ENCODE measurements at regions of chr17 and their contacts with region 1.

Region 1: DNA sequence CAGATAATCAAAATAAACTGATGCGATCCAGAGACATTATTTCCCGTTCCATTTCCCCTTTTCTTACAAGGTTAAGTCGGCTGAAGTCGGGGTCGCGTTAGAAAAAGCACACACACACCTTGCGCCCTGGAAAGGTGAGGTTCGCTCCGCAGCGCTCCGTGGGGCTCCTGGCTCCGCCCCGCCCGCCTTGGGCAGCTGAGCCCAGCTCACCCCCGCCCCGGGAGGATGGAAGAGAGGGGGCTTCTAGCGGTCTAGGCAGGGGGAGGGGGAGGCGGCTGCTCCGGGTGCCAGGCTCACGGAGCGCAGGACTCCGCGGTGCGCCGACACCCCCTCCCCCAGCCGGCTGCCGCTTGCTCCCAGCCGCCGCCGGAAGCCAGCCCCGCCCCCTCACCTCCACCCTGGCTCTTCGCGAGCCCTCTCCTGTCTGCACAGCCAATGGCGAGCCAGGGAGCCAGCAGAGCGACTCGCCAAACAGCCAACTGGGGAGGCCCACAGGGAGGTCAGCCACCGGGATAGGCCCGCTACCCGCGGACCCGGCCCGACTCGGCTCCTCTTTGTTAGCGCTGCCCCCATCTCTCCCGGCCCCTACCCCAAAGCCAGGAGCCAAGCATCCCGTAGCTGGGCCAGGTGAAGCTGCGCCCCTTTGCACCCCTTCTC is 30.4 kb downstream of the FAM222B start:
- DNase-seq: peak; percentile 99
- H3K4me3 Mint-ChIP-seq: peak overlapping the region; percentile 85
- H3K27ac Mint-ChIP-seq: peak overlapping the region; percentile 97
- H3K4me1 Mint-ChIP-seq: peaks cover 36% of the 10 kb centered on the region
- H3K27me3 Mint-ChIP-seq: no peaks in the 10 kb centered on the region

Region 2: GRCh38 chr17:28763804-28764266 is 48.4 kb before region 1 on chr17:
- intact Hi-C with region 1: loop called (anchors 5 kb)
- DNase-seq: peak; percentile 93
- H3K4me3 Mint-ChIP-seq: no peak overlapping the region
- H3K27ac Mint-ChIP-seq: no peak overlapping the region
- H3K4me1 Mint-ChIP-seq: peaks cover 15% of the 10 kb centered on the region
- H3K27me3 Mint-ChIP-seq: no peaks in the 10 kb centered on the region

Region 3: DNA sequence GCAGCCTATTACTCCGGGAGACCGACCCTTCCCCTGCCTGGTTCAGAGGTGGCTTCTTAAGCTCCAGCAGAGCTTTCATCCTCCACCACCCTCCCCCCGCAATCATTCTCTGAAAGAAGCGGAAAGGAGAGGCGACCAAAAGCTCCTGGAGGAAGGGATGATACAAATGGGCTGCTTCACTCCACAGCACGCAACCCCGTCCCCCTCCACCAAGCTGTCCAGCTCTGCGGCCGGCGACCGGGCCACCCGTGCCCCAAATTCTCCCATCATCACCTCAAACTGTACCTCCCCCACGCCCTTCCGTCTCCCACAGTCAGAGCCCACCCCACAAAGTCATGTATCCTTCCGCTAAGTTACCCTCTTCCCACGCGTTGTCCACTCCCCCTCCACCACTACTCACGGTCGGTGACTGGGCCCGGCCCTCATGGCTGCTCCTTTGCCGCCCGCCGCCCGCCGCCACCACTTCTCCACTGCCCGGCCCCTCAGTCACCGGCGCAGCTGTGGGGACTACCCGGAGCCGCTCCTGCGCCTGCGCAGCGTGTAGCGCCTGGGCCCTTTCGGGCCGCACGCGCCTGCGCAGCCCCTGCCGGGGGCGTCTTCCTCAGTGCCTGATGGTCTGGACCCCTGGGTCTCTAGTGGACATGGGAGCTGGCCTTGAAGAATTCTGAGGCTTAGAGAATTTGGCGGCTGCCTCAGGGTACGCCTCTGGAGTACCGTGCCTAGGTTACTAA is 30.2 kb after region 1 on chr17 and contains the start of gene FAM222B:
- intact Hi-C with region 1: loop called (anchors 2 kb)
- DNase-seq: peak; percentile 97
- H3K4me3 Mint-ChIP-seq: peak within 1 kb of the TSS; percentile 98
- H3K27ac Mint-ChIP-seq: peak within 1 kb of the TSS; percentile 96
- H3K4me1 Mint-ChIP-seq: peaks cover 19% of the 10 kb centered on the region
- H3K27me3 Mint-ChIP-seq: no peaks in the 10 kb centered on the region
- total RNA-seq, gene FAM222B: 22.4 and 24.0 TPM in 2 replicates

Region 4: GRCh38 chr17:28854457-28855350 is 42.5 kb after region 1 on chr17 and contains the start of gene ERAL1:
- intact Hi-C with region 1: loop called (anchors 5 kb)
- DNase-seq: peak; percentile 96
- H3K4me3 Mint-ChIP-seq: peak within 1 kb of the TSS; percentile 82
- H3K27ac Mint-ChIP-seq: peak within 1 kb of the TSS; percentile 85
- H3K4me1 Mint-ChIP-seq: peaks cover 19% of the 10 kb centered on the region
- H3K27me3 Mint-ChIP-seq: no peaks in the 10 kb centered on the region
- total RNA-seq, gene ERAL1: 56.8 and 61.2 TPM in 2 replicates

Region 5: DNA sequence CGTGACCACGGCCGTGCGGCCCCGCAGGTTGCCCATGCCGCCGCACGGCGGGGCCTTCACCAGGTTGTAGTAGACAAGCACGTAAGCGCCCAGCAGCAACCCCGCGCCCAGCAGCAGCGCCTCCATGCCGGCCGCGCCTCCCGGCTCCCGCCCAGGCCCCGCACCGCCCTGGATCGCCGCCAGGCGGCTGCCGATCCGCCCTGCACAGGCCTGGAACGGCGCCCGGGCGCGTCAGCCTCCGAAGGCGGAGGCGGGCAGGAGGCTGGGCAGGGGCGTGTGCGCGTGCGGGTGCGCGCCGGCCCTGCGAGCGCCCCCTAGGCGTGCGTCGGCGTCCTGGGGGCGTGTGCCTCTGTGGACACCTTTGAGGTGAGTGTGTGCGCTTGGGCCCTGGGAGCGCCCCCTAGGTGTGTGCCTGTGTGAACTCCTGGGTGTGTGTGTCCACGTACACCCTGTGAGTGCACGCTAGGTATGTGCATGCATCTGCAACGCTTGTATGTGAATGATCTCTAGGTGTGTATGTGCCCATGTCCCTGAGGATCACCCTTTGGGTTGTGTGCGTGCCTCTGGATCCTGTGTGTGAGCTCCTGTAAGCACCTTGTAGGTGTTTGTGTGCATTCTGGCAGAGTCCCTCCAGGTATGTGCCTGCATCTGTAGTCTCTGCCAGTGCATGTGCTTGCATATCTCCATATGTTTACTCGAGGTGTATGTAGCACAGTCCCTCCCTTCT is 90.8 kb after region 1 on chr17 and contains the start of gene DHRS13:
- intact Hi-C with region 1: loop called (anchors 2 kb)
- DNase-seq: peak; percentile 99
- H3K4me3 Mint-ChIP-seq: peak within 1 kb of the TSS; percentile 90
- H3K27ac Mint-ChIP-seq: peak within 1 kb of the TSS; percentile 86
- H3K4me1 Mint-ChIP-seq: peaks cover 39% of the 10 kb centered on the region
- H3K27me3 Mint-ChIP-seq: no peaks in the 10 kb centered on the region
- total RNA-seq, gene DHRS13: 32.4 and 34.3 TPM in 2 replicates

Region 6: GRCh38 chr17:29107941-29108419 is 295.8 kb after region 1 on chr17:
- intact Hi-C with region 1: no loop called
- DNase-seq: no peak
- H3K4me3 Mint-ChIP-seq: no peak overlapping the region
- H3K27ac Mint-ChIP-seq: no peak overlapping the region
- H3K4me1 Mint-ChIP-seq: no peaks in the 10 kb centered on the region
- H3K27me3 Mint-ChIP-seq: no peaks in the 10 kb centered on the region